CD8-positive, alpha-beta T cell (primary cell): ENCODE measurements at regions of chr1 and their contacts with region 1.

Region 1: DNA sequence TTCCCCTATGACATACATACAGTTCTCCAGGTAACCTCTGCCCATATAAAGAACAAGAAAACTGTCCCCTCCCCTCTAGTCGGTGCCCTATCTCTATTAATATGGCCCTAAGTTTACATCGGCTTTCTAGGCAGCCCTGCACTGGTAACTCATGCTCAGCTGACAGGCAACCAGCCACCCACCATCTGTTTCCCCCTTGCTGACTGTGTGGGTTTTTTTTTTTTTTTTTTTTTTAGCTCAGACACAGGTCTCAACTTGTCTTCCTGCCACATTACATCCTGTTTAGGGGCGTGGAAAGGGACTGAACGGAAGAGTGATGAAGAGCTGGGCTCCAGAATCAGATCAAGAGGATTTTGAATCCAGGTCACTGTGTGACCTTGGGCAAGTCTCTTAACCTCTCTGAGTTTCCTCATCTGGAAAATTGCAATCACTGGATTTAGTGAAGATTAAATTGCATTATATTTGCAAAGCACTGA is 14.0 kb downstream of the LAPTM5 start:
- DNase-seq: peak; percentile 43 to 94 (median 75)
- ATAC-seq: peak; percentile 82
- H3K4me3 ChIP-seq: peak overlapping the region; percentile 25 to 27
- H3K4me3 Mint-ChIP-seq: peak overlapping the region; percentile 77
- H3K27ac ChIP-seq: peak overlapping the region; percentile 72 to 92
- H3K27ac Mint-ChIP-seq: peak overlapping the region; percentile 99
- H3K4me1 ChIP-seq: peaks cover 90% of the 10 kb centered on the region
- H3K4me1 Mint-ChIP-seq: peaks cover 94% of the 10 kb centered on the region
- H3K27me3 ChIP-seq: no peaks in the 10 kb centered on the region
- H3K27me3 Mint-ChIP-seq: no peaks in the 10 kb centered on the region
- CTCF ChIP-seq: no peak

Region 2: GRCh38 chr1:29849038-29849750 is 894.4 kb before region 1 on chr1:
- CTCF ChIA-PET with region 1: no interaction called
- POLR2A ChIA-PET with region 1: no interaction called
- intact Hi-C with region 1: no loop called
- DNase-seq: peak in 7 of 9 experiments; percentile 4 to 55 (median 41)
- ATAC-seq: no peak
- H3K4me3 ChIP-seq: no peak overlapping the region
- H3K4me3 Mint-ChIP-seq: no peak overlapping the region
- H3K27ac ChIP-seq: no peak overlapping the region
- H3K27ac Mint-ChIP-seq: no peak overlapping the region
- H3K4me1 ChIP-seq: no peaks in the 10 kb centered on the region
- H3K4me1 Mint-ChIP-seq: no peaks in the 10 kb centered on the region
- H3K27me3 ChIP-seq: no peaks in the 10 kb centered on the region
- H3K27me3 Mint-ChIP-seq: peaks cover 24% of the 10 kb centered on the region
- CTCF ChIP-seq: peak; percentile 26

Region 3: DNA sequence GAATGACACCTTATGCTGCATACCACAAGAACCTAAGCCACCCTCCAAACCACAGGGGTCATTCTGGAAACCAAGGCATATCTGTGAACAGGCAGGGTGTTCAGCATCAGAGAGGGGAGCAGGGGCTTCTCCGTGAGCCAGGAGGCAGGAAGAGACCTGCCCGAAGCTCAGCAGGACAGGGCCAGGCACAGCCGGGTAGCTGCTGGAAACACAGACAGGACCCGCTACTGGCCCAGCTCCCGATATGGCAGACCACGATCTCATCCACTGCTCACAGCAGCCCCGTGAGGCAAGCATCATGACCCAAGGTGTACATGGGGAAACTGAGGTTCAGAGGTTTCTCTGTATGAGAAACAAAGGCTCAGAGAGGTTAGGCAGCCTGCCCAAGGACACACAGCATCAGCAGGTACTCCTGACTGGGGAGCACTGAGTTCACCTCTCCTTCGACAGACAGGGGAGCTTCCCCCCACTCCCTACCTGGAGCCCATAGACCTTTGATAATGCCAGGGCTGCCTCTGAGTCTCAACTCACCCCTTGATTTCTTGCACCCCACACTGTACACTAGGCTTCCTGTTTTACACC is 337.9 kb before region 1 on chr1:
- CTCF ChIA-PET with region 1: no interaction called
- POLR2A ChIA-PET with region 1: no interaction called
- intact Hi-C with region 1: no loop called
- DNase-seq: peak in 1 of 9 experiments; percentile 42
- ATAC-seq: no peak
- H3K4me3 ChIP-seq: no peak overlapping the region
- H3K4me3 Mint-ChIP-seq: no peak overlapping the region
- H3K27ac ChIP-seq: no peak overlapping the region
- H3K27ac Mint-ChIP-seq: no peak overlapping the region
- H3K4me1 ChIP-seq: no peaks in the 10 kb centered on the region
- H3K4me1 Mint-ChIP-seq: no peaks in the 10 kb centered on the region
- H3K27me3 ChIP-seq: no peaks in the 10 kb centered on the region
- H3K27me3 Mint-ChIP-seq: peaks cover 15% of the 10 kb centered on the region
- CTCF ChIP-seq: no peak

Region 4: DNA sequence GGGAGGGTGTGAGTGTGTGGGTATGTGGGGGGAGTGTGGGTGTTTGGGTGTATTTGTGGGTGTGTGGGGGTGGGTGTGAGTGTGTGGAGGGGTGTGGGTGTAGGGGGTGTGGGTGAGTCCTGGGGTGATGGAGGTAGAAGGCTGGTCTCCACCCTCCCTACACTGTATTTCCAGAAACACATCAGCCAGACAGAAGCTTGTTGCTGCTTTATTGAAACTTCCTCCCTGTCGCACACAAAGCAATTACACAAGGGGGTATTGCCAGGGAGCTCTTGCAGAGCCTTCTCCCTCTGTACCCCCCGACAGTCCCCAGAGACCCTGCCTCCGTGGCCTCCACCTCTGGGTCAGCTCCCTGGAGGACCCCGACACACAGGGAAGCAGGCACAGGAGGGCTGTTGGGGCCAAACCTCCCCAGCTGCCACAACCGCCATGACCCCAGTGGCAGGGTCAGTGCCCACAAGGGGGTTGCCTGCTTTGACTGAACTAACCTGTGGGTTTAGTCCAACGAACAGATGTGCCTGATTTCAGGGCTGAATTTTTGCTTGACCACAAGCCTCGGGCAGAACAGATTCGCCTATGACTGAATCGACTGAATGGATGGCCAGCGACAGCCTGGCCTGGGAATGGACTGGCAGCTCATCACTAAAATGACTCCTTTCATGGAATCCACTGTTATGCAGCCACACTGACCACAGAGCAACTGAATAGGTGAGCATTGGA is 11.2 kb before region 1 on chr1:
- CTCF ChIA-PET with region 1: interaction called, 10 read pairs
- POLR2A ChIA-PET with region 1: interaction called, 52 read pairs
- intact Hi-C with region 1: loop called in 1 of 2 experiments (anchors 1 kb)
- DNase-seq: peak in 2 of 9 experiments; percentile 53 to 68
- ATAC-seq: peak; percentile 69
- H3K4me3 ChIP-seq: no peak overlapping the region
- H3K4me3 Mint-ChIP-seq: no peak overlapping the region
- H3K27ac ChIP-seq: peak overlapping the region; percentile 10 to 56
- H3K27ac Mint-ChIP-seq: peak overlapping the region; percentile 76
- H3K4me1 ChIP-seq: peaks cover 13% of the 10 kb centered on the region
- H3K4me1 Mint-ChIP-seq: peaks cover 32% of the 10 kb centered on the region
- H3K27me3 ChIP-seq: no peaks in the 10 kb centered on the region
- H3K27me3 Mint-ChIP-seq: no peaks in the 10 kb centered on the region
- CTCF ChIP-seq: no peak

Region 5: DNA sequence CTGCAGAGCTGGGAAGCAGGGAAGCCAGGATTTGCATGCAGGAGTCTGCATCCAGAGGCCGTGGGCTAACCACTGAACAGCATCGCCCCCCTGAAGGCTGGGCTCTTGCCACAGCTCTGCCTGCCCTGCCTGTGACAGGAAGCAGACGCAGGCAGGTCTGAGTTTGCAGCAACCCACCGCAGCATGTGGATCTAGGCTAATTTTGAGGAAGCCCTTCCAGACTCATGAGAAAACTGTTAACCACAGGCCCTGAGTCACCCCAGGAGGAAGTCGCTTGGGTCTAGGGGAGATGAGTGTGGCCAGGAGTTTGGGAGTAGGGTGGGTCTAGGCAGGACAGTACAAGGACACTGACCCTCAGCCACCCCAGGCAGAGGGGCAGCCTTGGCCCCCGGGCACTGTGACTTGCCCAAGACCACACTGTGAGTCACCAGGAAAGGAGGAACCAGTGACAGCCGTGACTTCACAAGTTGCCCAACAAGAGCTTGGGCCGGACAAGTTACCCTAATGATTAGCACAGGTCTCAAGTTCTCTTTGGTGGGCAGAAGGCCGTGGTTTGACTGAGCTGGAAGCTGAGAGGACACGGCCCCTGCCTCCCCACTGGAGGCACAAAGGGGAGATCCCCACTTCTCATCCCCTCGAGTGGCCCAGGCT is 13.0 kb after region 1 on chr1:
- CTCF ChIA-PET with region 1: interaction called, 91 read pairs
- POLR2A ChIA-PET with region 1: interaction called, 326 read pairs
- intact Hi-C with region 1: loop called (anchors 1 kb)
- DNase-seq: peak; percentile 52 to 92 (median 80)
- ATAC-seq: peak; percentile 59
- H3K4me3 ChIP-seq: peak overlapping the region; percentile 70 to 87
- H3K4me3 Mint-ChIP-seq: peak overlapping the region; percentile 97
- H3K27ac ChIP-seq: peak overlapping the region; percentile 78 to 92
- H3K27ac Mint-ChIP-seq: peak overlapping the region; percentile 99
- H3K4me1 ChIP-seq: peaks cover 72% of the 10 kb centered on the region
- H3K4me1 Mint-ChIP-seq: peaks cover 86% of the 10 kb centered on the region
- H3K27me3 ChIP-seq: no peaks in the 10 kb centered on the region
- H3K27me3 Mint-ChIP-seq: no peaks in the 10 kb centered on the region
- CTCF ChIP-seq: no peak